ENCODE measurements at regions of chr1 and their contacts with region 1.

Region 1: DNA sequence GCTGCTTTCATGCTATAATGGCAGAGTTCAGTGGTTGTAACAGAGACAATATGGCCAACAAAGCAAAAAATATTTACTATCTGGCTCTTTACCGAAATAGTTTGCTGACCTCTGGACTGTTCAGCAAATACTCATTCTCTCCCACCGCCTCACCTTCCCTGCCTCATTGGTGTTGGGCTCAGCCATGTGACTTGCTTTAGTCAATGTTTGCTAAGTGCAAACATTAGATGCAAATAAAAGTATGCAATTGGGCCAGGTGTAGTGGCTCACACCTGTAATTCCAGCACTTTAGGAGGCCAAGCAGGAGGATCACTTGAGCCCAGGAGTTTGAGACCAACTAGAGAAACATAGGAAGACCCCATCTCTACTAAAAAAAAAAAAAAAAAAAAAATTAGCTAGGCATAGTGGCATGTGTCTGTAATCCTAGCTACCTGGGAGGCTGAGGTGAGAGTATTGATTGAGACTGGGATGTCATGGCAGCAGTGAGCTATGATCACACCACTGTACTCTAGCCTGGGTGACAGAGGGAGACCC is 55.1 kb downstream of the RPL5 start:
- DNase-seq: no peak
- ATAC-seq: no peak
- H3K4me3 ChIP-seq: no peak overlapping the region
- H3K27ac ChIP-seq: no peak overlapping the region
- H3K4me1 ChIP-seq: no peaks in the 10 kb centered on the region
- H3K27me3 ChIP-seq: no peaks in the 10 kb centered on the region
- CTCF ChIP-seq: no peak

Region 2: DNA sequence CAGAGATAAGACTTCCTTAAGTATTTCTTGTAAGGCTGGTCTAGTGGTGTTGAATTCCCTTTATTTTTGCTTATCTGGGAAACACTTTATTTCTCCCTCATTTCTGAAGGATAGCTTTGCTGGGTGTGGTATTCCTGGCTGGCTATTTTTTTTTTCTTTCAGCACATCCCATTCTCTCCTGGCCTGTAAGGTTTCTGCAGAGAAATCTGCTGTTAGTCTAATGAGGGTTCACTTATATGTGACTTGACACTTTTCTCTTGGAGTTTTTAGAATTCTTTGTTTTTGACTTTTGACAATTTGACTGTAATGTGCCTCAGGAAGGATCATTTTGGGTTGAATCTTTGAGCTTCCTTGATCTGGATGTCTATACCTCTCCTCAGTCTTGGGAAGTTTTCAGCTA is 12.8 kb after region 1 on chr1:
- intact Hi-C with region 1: loop called in 1 of 2 experiments (anchors 1 kb)
- DNase-seq: no peak
- ATAC-seq: no peak
- H3K4me3 ChIP-seq: no peak overlapping the region
- H3K27ac ChIP-seq: no peak overlapping the region
- H3K4me1 ChIP-seq: no peaks in the 10 kb centered on the region
- H3K27me3 ChIP-seq: no peaks in the 10 kb centered on the region
- CTCF ChIP-seq: no peak